ENCODE measurements at regions of chr19 and their contacts with region 1.

Region 1: DNA sequence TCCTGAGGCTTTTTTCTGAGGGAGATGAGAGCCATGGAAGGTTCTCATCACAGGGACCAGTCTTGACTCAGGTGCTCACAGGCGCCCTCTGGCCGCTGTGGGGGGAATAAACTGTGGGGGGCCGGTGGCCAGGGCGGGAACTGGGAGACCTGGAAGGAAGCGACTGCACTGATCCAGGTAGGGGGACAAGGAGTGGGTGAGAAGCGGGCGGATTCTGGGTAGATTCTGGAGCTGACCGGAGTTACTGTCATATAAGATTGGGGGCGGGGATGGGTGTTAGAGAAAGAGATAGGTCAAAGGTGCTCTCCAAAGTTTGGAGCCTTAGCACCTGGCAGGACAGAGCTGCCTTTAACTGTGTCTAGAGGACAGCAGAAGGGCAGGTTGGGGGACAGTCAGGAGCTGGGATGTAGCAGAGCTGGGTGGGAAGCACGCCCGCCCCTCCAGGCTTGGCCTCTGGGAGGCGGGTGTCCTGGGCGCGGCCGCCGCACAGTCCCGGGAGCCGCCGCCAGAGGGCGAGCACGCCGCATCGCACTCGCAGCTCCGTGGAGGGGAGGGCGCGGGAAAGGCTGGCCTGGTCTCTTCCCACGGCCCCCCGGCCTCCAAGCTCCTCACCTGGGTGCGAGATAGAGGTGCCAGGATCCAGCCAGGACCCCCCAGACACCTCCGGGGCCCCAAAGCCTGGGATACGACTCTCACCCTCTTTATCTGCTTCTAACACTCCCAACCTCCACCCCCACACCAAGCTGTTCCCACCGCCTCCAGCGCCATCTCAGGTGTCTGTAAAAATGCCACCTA is 4.2 kb upstream of the DAND5 start:
- DNase-seq: peak; percentile 87
- ATAC-seq: peak; percentile 96
- H3K4me3 Mint-ChIP-seq: peak overlapping the region; percentile 90
- H3K27ac Mint-ChIP-seq: peak overlapping the region; percentile 92
- H3K4me1 Mint-ChIP-seq: peaks cover 11% of the 10 kb centered on the region
- H3K27me3 Mint-ChIP-seq: no peaks in the 10 kb centered on the region
- CTCF ChIP-seq: peak; percentile 96

Region 2: DNA sequence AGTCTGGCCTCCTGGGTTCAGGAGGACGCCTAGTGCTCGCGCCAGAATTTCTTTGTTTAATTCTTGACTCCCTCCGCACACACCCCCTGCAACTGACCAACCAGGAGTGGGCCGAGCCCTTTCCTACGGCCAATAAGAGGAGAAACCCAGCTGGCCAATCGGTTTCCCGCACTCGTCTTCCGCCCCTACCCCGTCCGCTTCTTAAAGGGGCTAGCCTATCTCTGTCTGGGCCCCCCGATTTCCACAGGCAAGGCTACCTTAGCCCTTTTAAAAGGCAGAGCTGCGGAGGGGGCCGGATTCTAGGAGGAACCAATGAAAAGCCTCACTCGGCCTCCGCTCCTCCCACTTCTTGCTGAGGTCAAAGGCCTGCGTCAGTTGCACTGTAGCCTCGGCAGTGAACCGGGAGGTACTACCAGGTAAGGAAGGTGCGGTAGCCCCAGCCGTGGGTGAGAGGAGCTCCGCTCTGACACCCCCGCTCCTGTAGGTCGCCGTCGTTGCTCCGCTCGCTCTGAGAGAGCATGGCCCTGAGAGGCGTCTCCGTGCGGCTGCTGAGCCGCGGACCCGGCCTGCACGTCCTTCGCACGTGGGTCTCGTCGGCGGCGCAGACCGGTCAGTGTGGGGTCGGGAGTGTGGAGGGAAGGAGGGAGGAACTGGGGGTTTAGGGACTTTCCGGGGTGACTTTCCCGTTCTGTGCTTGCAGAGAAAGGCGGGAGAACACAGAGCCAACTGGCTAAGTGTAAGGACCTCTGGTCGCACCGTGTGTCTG is 74.2 kb before region 1 on chr19 and contains the start of gene GCDH:
- CTCF ChIA-PET with region 1: interaction called, 67 read pairs
- POLR2A ChIA-PET with region 1: no interaction called
- intact Hi-C with region 1: no loop called
- DNase-seq: peak; percentile 99
- ATAC-seq: peak; percentile 95
- H3K4me3 Mint-ChIP-seq: peak within 1 kb of the TSS; percentile 100
- H3K27ac Mint-ChIP-seq: peak within 1 kb of the TSS; percentile 95
- H3K4me1 Mint-ChIP-seq: peaks cover 21% of the 10 kb centered on the region
- H3K27me3 Mint-ChIP-seq: no peaks in the 10 kb centered on the region
- CTCF ChIP-seq: no peak
- total RNA-seq, gene GCDH: 37.5 to 43.8 TPM

Region 3: GRCh38 chr19:12938234-12939025 is 26.8 kb before region 1 on chr19 and contains the start of gene CALR:
- CTCF ChIA-PET with region 1: interaction called, 19 read pairs
- POLR2A ChIA-PET with region 1: interaction called, 4 read pairs
- intact Hi-C with region 1: no loop called
- DNase-seq: peak; percentile 100
- ATAC-seq: peak; percentile 87
- H3K4me3 Mint-ChIP-seq: peak within 1 kb of the TSS; percentile 99
- H3K27ac Mint-ChIP-seq: peak within 1 kb of the TSS; percentile 95
- H3K4me1 Mint-ChIP-seq: peaks cover 49% of the 10 kb centered on the region
- H3K27me3 Mint-ChIP-seq: no peaks in the 10 kb centered on the region
- CTCF ChIP-seq: no peak
- total RNA-seq, gene CALR: 535 to 563 TPM

Region 4: DNA sequence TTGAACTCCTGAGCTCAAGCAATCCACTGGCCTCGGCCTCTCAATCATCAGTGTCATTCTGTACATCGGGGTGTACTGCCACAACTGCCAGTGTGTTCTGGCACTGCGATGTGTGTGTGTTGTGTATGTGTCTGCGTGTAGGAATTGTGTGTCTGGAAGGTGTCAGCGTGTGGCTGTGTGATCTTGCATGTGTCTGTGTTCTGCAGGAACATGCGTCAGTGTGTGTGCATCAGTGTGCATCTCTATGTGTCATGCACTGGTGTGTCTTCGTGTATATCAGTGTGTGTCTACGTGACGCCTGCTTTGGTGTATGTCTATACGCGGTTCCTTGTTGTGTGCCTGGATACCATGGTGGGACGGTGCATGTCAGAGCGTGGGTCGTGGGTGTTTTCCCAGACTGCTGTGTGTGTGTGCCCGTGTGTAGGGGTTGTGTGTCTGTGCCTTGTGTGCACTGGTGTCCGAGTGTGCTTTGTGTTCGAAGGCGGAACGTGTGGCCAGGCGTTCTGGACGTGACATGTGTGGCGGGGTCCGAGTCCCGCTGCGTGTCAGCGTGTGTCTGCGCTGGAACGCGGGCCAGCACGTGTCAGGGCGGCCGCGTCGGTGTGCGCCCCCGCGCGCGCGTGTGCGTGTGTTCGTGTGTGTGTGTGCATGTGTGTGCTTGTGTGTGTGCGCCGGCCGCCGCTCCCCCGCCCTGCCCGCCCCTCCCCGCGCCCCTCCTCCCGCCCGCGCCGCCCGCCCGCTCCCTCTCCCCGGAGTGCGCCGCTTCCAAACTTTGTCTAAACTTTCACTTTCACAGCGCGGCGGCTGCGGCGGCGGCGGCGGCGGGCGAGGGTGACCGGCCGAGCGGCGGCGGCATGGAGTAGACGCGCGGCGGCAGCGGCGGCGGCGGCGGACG is 29.7 kb after region 1 on chr19 and contains the start of gene NFIX:
- CTCF ChIA-PET with region 1: interaction called, 10 read pairs
- POLR2A ChIA-PET with region 1: no interaction called
- intact Hi-C with region 1: no loop called
- DNase-seq: peak; percentile 60
- ATAC-seq: peak; percentile 72
- H3K4me3 Mint-ChIP-seq: peak within 1 kb of the TSS; percentile 82
- H3K27ac Mint-ChIP-seq: peak within 1 kb of the TSS; percentile 60
- H3K4me1 Mint-ChIP-seq: peaks cover 8% of the 10 kb centered on the region
- H3K27me3 Mint-ChIP-seq: peaks cover 8% of the 10 kb centered on the region
- CTCF ChIP-seq: no peak
- total RNA-seq, gene NFIX: 4.7 to 5.0 TPM

Region 5: GRCh38 chr19:13033819-13034611 is 68.8 kb after region 1 on chr19:
- CTCF ChIA-PET with region 1: interaction called, 39 read pairs
- POLR2A ChIA-PET with region 1: no interaction called
- intact Hi-C with region 1: no loop called
- DNase-seq: peak; percentile 77
- ATAC-seq: peak; percentile 88
- H3K4me3 Mint-ChIP-seq: no peak overlapping the region
- H3K27ac Mint-ChIP-seq: no peak overlapping the region
- H3K4me1 Mint-ChIP-seq: peaks cover 10% of the 10 kb centered on the region
- H3K27me3 Mint-ChIP-seq: no peaks in the 10 kb centered on the region
- CTCF ChIP-seq: peak; percentile 75

Region 6: GRCh38 chr19:13060964-13061927 is 96.0 kb after region 1 on chr19:
- CTCF ChIA-PET with region 1: interaction called, 82 read pairs
- POLR2A ChIA-PET with region 1: no interaction called
- intact Hi-C with region 1: no loop called
- DNase-seq: peak; percentile 88
- ATAC-seq: peak; percentile 99
- H3K4me3 Mint-ChIP-seq: peak overlapping the region; percentile 65
- H3K27ac Mint-ChIP-seq: no peak overlapping the region
- H3K4me1 Mint-ChIP-seq: peaks cover 6% of the 10 kb centered on the region
- H3K27me3 Mint-ChIP-seq: peaks cover 14% of the 10 kb centered on the region
- CTCF ChIP-seq: peak; percentile 98

Region 7: GRCh38 chr19:13104360-13104847 is 139.2 kb after region 1 on chr19:
- CTCF ChIA-PET with region 1: interaction called, 21 read pairs
- POLR2A ChIA-PET with region 1: interaction called, 8 read pairs
- intact Hi-C with region 1: no loop called
- DNase-seq: peak; percentile 74
- ATAC-seq: peak; percentile 63
- H3K4me3 Mint-ChIP-seq: peak overlapping the region; percentile 80
- H3K27ac Mint-ChIP-seq: peak overlapping the region; percentile 86
- H3K4me1 Mint-ChIP-seq: peaks cover 28% of the 10 kb centered on the region
- H3K27me3 Mint-ChIP-seq: no peaks in the 10 kb centered on the region
- CTCF ChIP-seq: peak; percentile 98

Region 8: DNA sequence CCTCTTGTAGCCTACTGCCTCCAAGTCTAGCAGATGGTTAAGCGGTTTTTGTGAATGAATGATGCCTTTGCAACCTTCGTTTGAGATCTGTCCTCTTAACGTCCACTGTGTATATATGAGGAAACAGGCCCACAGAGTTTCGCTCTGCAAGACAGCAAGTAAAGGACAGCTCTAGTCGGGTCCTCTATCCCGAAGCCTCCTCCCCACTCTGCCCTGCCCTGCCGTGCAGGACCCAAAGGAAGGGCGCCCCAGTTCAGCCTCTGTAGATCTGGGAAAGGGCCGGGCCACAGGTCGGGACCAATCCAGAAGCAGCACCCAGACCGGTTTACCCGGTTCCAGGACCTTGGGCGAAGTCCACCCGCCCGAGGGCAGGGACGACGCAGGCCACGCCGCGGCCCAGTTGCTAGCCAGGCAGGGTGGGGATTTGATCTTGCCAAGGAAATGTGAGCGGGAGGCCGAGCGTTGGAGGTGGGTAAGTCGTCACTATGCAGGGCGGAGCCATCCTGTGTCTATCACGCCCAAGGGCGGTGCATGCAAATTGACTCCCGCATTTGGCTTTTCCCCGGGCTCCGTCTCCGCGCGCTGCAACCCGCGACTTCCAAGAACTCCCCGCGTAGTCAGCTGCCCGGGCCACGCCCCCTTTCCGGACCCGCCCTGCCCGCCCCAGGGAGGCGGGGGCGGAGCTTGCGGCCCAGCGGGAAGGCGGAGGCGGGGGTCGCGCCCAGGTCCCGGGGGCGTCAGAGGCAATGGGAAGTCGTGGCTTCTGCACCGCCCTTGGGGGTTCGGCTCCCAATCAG is 197.5 kb after region 1 on chr19:
- CTCF ChIA-PET with region 1: no interaction called
- POLR2A ChIA-PET with region 1: no interaction called
- intact Hi-C with region 1: no loop called
- DNase-seq: peak; percentile 96
- ATAC-seq: peak; percentile 53
- H3K4me3 Mint-ChIP-seq: peak overlapping the region; percentile 84
- H3K27ac Mint-ChIP-seq: peak overlapping the region; percentile 92
- H3K4me1 Mint-ChIP-seq: peaks cover 54% of the 10 kb centered on the region
- H3K27me3 Mint-ChIP-seq: no peaks in the 10 kb centered on the region
- CTCF ChIP-seq: no peak